ENCODE measurements at regions of chrX and their contacts with region 1.

Region 1: GRCh38 chrX:1537035-1537715 is at the start of gene P2RY8:
- DNase-seq: peak; percentile 88
- ATAC-seq: peak; percentile 77
- H3K4me3 ChIP-seq: peak within 1 kb of the TSS; percentile 86 to 97 (median 95)
- H3K4me3 Mint-ChIP-seq: peak within 1 kb of the TSS; percentile 98
- H3K27ac ChIP-seq: peak within 1 kb of the TSS; percentile 87 to 90
- H3K27ac Mint-ChIP-seq: peak within 1 kb of the TSS; percentile 99
- H3K4me1 ChIP-seq: peaks cover 7 to 29% of the 10 kb centered on the region in 2 donors
- H3K4me1 Mint-ChIP-seq: peaks cover 27% of the 10 kb centered on the region
- H3K27me3 ChIP-seq: no peaks in the 10 kb centered on the region
- H3K27me3 Mint-ChIP-seq: no peaks in the 10 kb centered on the region
- CTCF ChIP-seq: peak; percentile 28
- total RNA-seq, gene P2RY8: 140 and 142 TPM in 2 replicates

Region 2: GRCh38 chrX:1468250-1468772 is 68.9 kb before region 1 on chrX:
- CTCF ChIA-PET with region 1: no interaction called
- POLR2A ChIA-PET with region 1: no interaction called
- intact Hi-C with region 1: loop called (anchors 1 kb)
- DNase-seq: peak; percentile 86
- ATAC-seq: peak; percentile 67
- H3K4me3 ChIP-seq: no peak overlapping the region
- H3K4me3 Mint-ChIP-seq: peak overlapping the region; percentile 80
- H3K27ac ChIP-seq: peak overlapping the region; percentile 69 to 84
- H3K27ac Mint-ChIP-seq: peak overlapping the region; percentile 95
- H3K4me1 ChIP-seq: peaks cover 68 to 86% of the 10 kb centered on the region in 2 donors
- H3K4me1 Mint-ChIP-seq: peaks cover 68% of the 10 kb centered on the region
- H3K27me3 ChIP-seq: no peaks in the 10 kb centered on the region
- H3K27me3 Mint-ChIP-seq: no peaks in the 10 kb centered on the region
- CTCF ChIP-seq: peak; percentile 25

Region 3: GRCh38 chrX:1500701-1501624 is 36.2 kb before region 1 on chrX:
- CTCF ChIA-PET with region 1: no interaction called
- POLR2A ChIA-PET with region 1: no interaction called
- intact Hi-C with region 1: loop called (anchors 1 kb)
- DNase-seq: peak; percentile 85
- ATAC-seq: peak; percentile 34
- H3K4me3 ChIP-seq: peak overlapping the region in 3 of 5 experiments; percentile 11 to 50 (median 31)
- H3K4me3 Mint-ChIP-seq: peak overlapping the region; percentile 70
- H3K27ac ChIP-seq: peak overlapping the region; percentile 93 to 94
- H3K27ac Mint-ChIP-seq: peak overlapping the region; percentile 93
- H3K4me1 ChIP-seq: peaks cover 46 to 61% of the 10 kb centered on the region in 2 donors
- H3K4me1 Mint-ChIP-seq: peaks cover 55% of the 10 kb centered on the region
- H3K27me3 ChIP-seq: no peaks in the 10 kb centered on the region
- H3K27me3 Mint-ChIP-seq: no peaks in the 10 kb centered on the region
- CTCF ChIP-seq: no peak

Region 4: GRCh38 chrX:1554469-1555210 is 17.5 kb after region 1 on chrX:
- CTCF ChIA-PET with region 1: no interaction called
- POLR2A ChIA-PET with region 1: no interaction called
- intact Hi-C with region 1: loop called (anchors 1 kb)
- DNase-seq: peak; percentile 89
- ATAC-seq: peak; percentile 98
- H3K4me3 ChIP-seq: peak overlapping the region in 1 of 5 experiments; percentile 23
- H3K4me3 Mint-ChIP-seq: peak overlapping the region; percentile 78
- H3K27ac ChIP-seq: peak overlapping the region; percentile 85 to 99
- H3K27ac Mint-ChIP-seq: peak overlapping the region; percentile 99
- H3K4me1 ChIP-seq: peaks cover 50 to 59% of the 10 kb centered on the region in 2 donors
- H3K4me1 Mint-ChIP-seq: peaks cover 53% of the 10 kb centered on the region
- H3K27me3 ChIP-seq: no peaks in the 10 kb centered on the region
- H3K27me3 Mint-ChIP-seq: no peaks in the 10 kb centered on the region
- CTCF ChIP-seq: no peak

Region 5: GRCh38 chrX:1591102-1591900 is 54.1 kb after region 1 on chrX and contains the start of gene AKAP17A:
- CTCF ChIA-PET with region 1: no interaction called
- POLR2A ChIA-PET with region 1: no interaction called
- intact Hi-C with region 1: loop called (anchors 1 kb)
- DNase-seq: peak; percentile 97
- ATAC-seq: peak; percentile 88
- H3K4me3 ChIP-seq: peak within 1 kb of the TSS; percentile 55 to 90 (median 78)
- H3K4me3 Mint-ChIP-seq: peak within 1 kb of the TSS; percentile 95
- H3K27ac ChIP-seq: peak within 1 kb of the TSS; percentile 61 to 81
- H3K27ac Mint-ChIP-seq: peak within 1 kb of the TSS; percentile 95
- H3K4me1 ChIP-seq: peaks cover 20 to 47% of the 10 kb centered on the region in 2 donors
- H3K4me1 Mint-ChIP-seq: peaks cover 40% of the 10 kb centered on the region
- H3K27me3 ChIP-seq: no peaks in the 10 kb centered on the region
- H3K27me3 Mint-ChIP-seq: no peaks in the 10 kb centered on the region
- CTCF ChIP-seq: peak; percentile 26
- total RNA-seq, gene AKAP17A: 126 and 129 TPM in 2 replicates